AG04449 (cell line): ENCODE measurements at regions of chr12 and their contacts with region 1.

Region 1: GRCh38 chr12:53200458-53201176 is 6.4 kb downstream of the ITGB7 start:
- DNase-seq: no peak
- H3K4me3 ChIP-seq: no peak overlapping the region
- CTCF ChIP-seq: no peak

Region 2: DNA sequence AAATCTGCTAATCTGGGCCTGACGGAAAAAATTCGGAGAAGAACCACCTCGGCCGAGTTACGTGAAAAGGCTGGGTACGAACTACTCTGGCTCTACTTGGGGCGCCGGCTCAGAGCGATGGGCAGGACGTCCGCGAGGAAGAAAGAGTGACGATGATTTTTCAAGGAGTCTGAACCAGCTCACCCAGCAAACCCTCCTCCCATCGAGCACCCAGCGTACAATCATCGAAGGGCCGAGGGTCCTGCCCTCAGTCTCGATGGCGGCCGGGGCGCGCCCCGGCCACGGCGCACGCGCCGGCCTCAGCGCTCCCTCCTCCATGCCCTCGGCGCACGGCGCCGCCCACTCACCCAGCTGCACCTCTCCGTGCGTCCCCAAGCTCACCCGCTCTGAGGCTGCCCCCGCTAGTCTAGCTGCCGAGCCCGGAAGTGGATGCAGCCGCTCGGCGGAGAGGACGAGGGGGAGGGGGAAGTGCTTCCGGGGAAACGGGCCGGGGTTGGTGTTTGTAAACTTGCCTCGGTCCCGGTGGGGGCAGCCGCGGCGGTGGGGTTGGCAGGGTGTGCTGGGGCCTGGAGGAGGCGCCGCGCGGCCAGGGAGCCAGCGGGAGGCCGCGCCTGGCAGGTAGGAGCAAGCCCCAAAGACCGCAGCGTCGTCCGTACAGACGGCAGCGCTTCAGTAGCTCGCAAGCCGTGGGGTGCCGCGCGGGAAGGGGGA is 20.2 kb before region 1 on chr12 and contains the starts of genes CSAD and ZNF740:
- CTCF ChIA-PET with region 1: interaction called, 43 read pairs
- POLR2A ChIA-PET with region 1: interaction called, 3 read pairs
- DNase-seq: peak; percentile 70
- H3K4me3 ChIP-seq: peak within 1 kb of the TSS; percentile 84
- CTCF ChIP-seq: no peak

Region 3: GRCh38 chr12:53190108-53190729 is 10.4 kb before region 1 on chr12:
- CTCF ChIA-PET with region 1: interaction called, 75 read pairs
- POLR2A ChIA-PET with region 1: interaction called, 3 read pairs
- DNase-seq: no peak
- H3K4me3 ChIP-seq: no peak overlapping the region
- CTCF ChIP-seq: peak; percentile 92

Region 4: DNA sequence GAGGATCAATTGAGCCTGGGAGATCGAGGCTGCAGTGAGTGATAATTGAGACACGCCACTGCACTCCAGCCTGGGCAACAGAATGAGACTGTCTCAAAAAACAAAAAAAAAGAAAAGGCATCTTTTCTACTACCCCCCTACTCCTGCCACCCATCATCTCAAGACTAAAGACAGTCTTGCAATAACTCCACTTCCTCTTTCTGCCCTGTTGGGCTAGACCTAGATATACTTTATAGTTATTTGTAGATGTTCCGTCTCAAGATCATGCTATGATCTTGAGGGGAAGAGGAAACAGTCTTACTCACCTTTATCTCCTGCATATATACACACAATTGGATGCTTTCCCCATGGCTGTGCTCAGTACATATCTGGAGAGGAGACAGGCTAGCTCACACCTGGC is 55.4 kb after region 1 on chr12:
- CTCF ChIA-PET with region 1: no interaction called
- POLR2A ChIA-PET with region 1: no interaction called
- DNase-seq: no peak
- H3K4me3 ChIP-seq: no peak overlapping the region
- CTCF ChIP-seq: no peak

Region 5: DNA sequence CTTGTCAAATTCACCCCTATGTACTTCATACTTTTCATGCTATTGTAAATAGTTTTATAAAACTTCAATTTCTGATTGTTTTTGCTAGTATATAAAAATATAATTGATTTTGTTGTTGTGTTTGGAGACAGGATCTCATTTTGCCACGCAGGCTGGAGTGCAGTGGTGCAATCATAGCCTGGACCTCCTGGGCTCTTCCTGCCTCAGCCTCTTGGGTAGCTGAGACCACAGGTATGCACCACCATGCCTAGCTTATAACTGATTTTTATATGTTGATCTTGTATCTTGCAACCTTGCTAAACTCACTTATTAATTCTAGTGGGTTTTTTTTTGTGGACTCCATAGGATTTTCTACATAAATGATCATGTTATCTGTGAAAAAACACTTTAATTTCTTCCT is 451.7 kb after region 1 on chr12:
- CTCF ChIA-PET with region 1: no interaction called
- POLR2A ChIA-PET with region 1: no interaction called
- DNase-seq: peak; percentile 59
- H3K4me3 ChIP-seq: no peak overlapping the region
- CTCF ChIP-seq: no peak